CD8-positive, alpha-beta T cell (primary cell): ENCODE measurements at regions of chr20 and their contacts with region 1.

Region 1: DNA sequence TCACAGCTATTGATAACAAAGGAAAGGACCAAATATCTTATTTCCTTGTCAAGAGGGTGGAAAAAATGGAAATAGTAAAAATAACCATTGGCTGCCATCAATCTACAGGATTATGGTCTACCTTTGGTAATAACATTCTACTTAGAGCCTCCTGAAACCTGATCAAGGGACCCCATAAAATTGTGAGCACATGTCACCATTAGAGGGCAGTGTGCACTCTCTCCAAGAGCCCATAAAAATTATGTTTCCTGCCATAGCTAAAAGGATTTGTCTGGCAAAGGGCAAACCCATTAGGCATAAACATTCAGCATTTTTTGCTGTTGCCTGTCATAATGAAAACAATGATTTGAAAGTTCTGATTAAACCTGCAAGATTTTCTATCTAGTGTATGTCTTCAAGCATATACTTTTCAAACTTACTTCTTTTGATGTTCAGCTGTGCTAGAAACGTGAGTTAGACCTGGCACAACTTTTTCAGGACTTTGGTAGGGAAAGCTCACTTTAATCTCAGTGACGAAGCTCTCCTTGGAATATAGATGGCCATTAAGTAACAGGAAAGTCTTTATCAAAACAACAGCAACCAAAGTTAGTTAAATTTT is 120.7 kb upstream of the ZFP64 start:
- DNase-seq: peak; percentile 11 to 79 (median 53)
- ATAC-seq: no peak
- H3K4me3 ChIP-seq: no peak overlapping the region
- H3K4me3 Mint-ChIP-seq: no peak overlapping the region
- H3K27ac ChIP-seq: no peak overlapping the region
- H3K27ac Mint-ChIP-seq: no peak overlapping the region
- H3K4me1 ChIP-seq: peaks cover 20% of the 10 kb centered on the region
- H3K4me1 Mint-ChIP-seq: peaks cover 21% of the 10 kb centered on the region
- H3K27me3 ChIP-seq: peaks cover 0 to 2% of the 10 kb centered on the region in 2 experiments
- H3K27me3 Mint-ChIP-seq: no peaks in the 10 kb centered on the region
- CTCF ChIP-seq: peak; percentile 93

Region 2: GRCh38 chr20:52209154-52209571 is 103.1 kb before region 1 on chr20:
- CTCF ChIA-PET with region 1: no interaction called
- POLR2A ChIA-PET with region 1: no interaction called
- intact Hi-C with region 1: no loop called
- DNase-seq: no peak
- ATAC-seq: no peak
- H3K4me3 ChIP-seq: no peak overlapping the region
- H3K4me3 Mint-ChIP-seq: no peak overlapping the region
- H3K27ac ChIP-seq: no peak overlapping the region
- H3K27ac Mint-ChIP-seq: no peak overlapping the region
- H3K4me1 ChIP-seq: no peaks in the 10 kb centered on the region
- H3K4me1 Mint-ChIP-seq: no peaks in the 10 kb centered on the region
- H3K27me3 ChIP-seq: no peaks in the 10 kb centered on the region
- H3K27me3 Mint-ChIP-seq: peaks cover 13% of the 10 kb centered on the region
- CTCF ChIP-seq: no peak

Region 3: DNA sequence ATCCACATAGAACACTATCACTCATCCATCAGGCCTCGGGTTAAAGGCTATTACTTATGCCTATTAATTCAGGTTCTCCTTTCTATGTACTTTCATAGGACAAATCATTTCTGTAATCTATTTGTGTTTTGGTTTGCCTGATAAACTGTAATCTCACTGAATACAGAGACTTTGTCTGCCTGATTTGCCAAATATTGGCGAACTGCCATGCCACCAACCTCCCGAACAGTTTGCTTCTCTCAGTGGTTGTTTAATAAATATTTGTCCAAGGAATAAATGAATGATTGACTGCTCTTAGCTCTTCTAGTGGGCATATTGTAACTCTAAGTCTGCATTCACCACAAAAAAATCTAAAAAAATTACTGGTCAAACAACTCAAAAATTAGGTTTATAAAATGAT is 49.4 kb after region 1 on chr20:
- CTCF ChIA-PET with region 1: no interaction called
- POLR2A ChIA-PET with region 1: no interaction called
- intact Hi-C with region 1: no loop called
- DNase-seq: no peak
- ATAC-seq: no peak
- H3K4me3 ChIP-seq: no peak overlapping the region
- H3K4me3 Mint-ChIP-seq: no peak overlapping the region
- H3K27ac ChIP-seq: no peak overlapping the region
- H3K27ac Mint-ChIP-seq: no peak overlapping the region
- H3K4me1 ChIP-seq: no peaks in the 10 kb centered on the region
- H3K4me1 Mint-ChIP-seq: peaks cover 2% of the 10 kb centered on the region
- H3K27me3 ChIP-seq: no peaks in the 10 kb centered on the region
- H3K27me3 Mint-ChIP-seq: peaks cover 17% of the 10 kb centered on the region
- CTCF ChIP-seq: no peak

Region 4: DNA sequence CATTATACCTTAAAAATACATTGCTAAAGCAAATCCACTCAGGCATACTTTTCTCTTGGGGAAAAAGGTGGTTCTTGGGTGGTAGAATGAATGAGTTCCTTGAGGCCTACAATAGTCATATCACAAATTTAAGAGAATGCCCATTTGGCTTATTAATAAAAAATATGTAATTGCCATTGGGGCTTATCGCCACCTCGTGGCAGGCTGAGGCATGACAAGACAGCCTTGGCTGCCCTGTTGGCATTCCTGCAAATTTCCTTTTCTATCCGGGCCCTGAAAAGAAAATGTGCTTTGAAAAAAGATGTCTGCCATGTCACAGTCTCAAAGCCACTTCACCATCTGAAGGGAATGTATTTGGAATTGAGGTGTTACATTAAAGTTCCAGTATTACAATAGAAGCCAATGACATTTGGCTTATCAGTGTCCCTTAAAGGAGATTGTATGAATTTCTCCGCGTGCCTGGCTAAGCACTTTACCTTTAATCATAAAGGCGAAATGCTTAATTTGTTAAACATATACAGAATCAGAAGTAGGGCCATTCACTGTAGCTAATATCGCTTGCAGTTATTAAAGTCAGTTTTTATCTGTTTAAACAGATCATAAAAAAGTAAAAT is 67.6 kb after region 1 on chr20:
- CTCF ChIA-PET with region 1: interaction called, 12 read pairs
- POLR2A ChIA-PET with region 1: no interaction called
- intact Hi-C with region 1: loop called in 1 of 2 experiments (anchors 1 kb)
- DNase-seq: peak in 7 of 9 experiments; percentile 5 to 62 (median 43)
- ATAC-seq: no peak
- H3K4me3 ChIP-seq: no peak overlapping the region
- H3K4me3 Mint-ChIP-seq: no peak overlapping the region
- H3K27ac ChIP-seq: no peak overlapping the region
- H3K27ac Mint-ChIP-seq: no peak overlapping the region
- H3K4me1 ChIP-seq: peaks cover 13% of the 10 kb centered on the region
- H3K4me1 Mint-ChIP-seq: peaks cover 19% of the 10 kb centered on the region
- H3K27me3 ChIP-seq: no peaks in the 10 kb centered on the region
- H3K27me3 Mint-ChIP-seq: no peaks in the 10 kb centered on the region
- CTCF ChIP-seq: peak; percentile 95

Region 5: DNA sequence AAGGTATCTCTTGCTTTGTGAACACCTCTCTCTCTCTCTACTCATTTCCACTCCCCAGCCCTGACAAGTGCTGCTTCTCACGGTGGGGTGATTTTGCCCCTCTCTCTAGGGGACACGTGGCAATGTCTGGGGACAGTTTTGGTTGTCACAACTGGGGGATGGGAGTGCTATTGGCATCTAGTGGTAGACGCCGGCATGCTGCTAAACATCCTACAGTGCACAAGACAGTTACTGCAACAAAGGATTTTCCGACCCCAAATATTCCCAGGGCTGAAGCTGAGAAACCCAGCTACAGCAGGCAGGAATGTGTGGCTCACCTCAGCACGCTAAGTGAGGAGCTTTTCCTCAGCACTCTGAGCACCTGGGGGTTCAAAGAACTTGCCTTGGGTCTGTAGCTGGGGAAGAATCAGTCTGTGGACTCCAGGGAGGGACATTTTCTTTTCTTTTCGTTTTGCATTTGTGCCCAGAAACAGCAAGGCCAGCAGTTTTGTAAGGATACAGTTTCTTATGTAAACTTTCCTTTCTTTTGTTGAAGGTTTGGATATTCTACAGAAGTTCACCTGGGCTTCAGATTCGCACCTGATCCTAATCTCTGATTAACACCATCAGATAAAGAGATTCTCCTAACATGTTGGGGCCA is 126.2 kb after region 1 on chr20:
- CTCF ChIA-PET with region 1: interaction called, 13 read pairs
- POLR2A ChIA-PET with region 1: no interaction called
- intact Hi-C with region 1: loop called (anchors 1 to 5 kb)
- DNase-seq: peak in 2 of 9 experiments; percentile 46 to 60
- ATAC-seq: no peak
- H3K4me3 ChIP-seq: no peak overlapping the region
- H3K4me3 Mint-ChIP-seq: no peak overlapping the region
- H3K27ac ChIP-seq: no peak overlapping the region
- H3K27ac Mint-ChIP-seq: no peak overlapping the region
- H3K4me1 ChIP-seq: no peaks in the 10 kb centered on the region
- H3K4me1 Mint-ChIP-seq: peaks cover 9% of the 10 kb centered on the region
- H3K27me3 ChIP-seq: no peaks in the 10 kb centered on the region
- H3K27me3 Mint-ChIP-seq: no peaks in the 10 kb centered on the region
- CTCF ChIP-seq: no peak

Region 6: DNA sequence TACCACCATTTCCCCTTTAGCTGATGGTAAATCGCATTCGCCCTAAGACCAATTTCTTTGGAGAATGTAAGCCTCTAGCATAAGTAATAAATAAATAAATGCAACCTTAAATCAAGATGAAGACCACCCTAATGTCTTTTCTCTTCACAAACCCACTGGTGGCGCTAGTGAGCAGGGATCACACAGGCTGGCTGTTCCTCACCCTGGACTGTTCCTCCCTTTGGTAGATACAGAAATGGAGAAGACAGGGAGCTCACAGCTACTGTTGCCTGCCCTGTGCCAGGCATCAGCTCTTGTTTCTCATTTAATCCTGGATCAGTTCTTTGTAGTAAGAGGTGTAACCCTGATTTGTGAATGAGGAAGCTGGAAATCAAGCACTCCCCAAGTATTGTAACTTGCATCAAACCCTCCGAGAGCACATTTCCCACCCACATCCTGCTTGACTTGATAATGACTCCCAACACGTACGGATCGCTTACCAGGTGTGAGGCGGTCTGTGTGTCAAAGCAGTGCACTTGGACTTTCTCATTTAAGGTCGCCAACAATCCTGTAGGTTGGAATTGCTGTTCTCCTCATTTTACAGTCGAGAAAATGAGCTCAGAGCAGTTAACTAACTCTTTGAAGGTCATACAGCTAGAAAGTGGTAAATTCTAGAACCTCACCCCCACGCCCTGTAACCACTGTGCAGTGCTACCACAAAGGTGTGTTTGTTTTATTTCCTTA is 896.0 kb after region 1 on chr20:
- CTCF ChIA-PET with region 1: interaction called, 13 read pairs
- POLR2A ChIA-PET with region 1: no interaction called
- intact Hi-C with region 1: no loop called
- DNase-seq: peak in 6 of 9 experiments; percentile 9 to 52 (median 21)
- ATAC-seq: peak; percentile 63
- H3K4me3 ChIP-seq: no peak overlapping the region
- H3K4me3 Mint-ChIP-seq: peak overlapping the region; percentile 45
- H3K27ac ChIP-seq: no peak overlapping the region
- H3K27ac Mint-ChIP-seq: peak overlapping the region; percentile 33
- H3K4me1 ChIP-seq: peaks cover 8% of the 10 kb centered on the region
- H3K4me1 Mint-ChIP-seq: peaks cover 12% of the 10 kb centered on the region
- H3K27me3 ChIP-seq: peaks cover 0 to 2% of the 10 kb centered on the region in 2 experiments
- H3K27me3 Mint-ChIP-seq: no peaks in the 10 kb centered on the region
- CTCF ChIP-seq: no peak

Region 7: GRCh38 chr20:53223626-53224025 is 911.4 kb after region 1 on chr20:
- CTCF ChIA-PET with region 1: interaction called, 72 read pairs
- POLR2A ChIA-PET with region 1: no interaction called
- intact Hi-C with region 1: no loop called
- DNase-seq: no peak
- ATAC-seq: no peak
- H3K4me3 ChIP-seq: no peak overlapping the region
- H3K4me3 Mint-ChIP-seq: no peak overlapping the region
- H3K27ac ChIP-seq: no peak overlapping the region
- H3K27ac Mint-ChIP-seq: no peak overlapping the region
- H3K4me1 ChIP-seq: no peaks in the 10 kb centered on the region
- H3K4me1 Mint-ChIP-seq: no peaks in the 10 kb centered on the region
- H3K27me3 ChIP-seq: no peaks in the 10 kb centered on the region
- H3K27me3 Mint-ChIP-seq: peaks cover 7% of the 10 kb centered on the region
- CTCF ChIP-seq: no peak

Region 8: GRCh38 chr20:53939572-53940359 is 1627.5 kb after region 1 on chr20:
- CTCF ChIA-PET with region 1: no interaction called
- POLR2A ChIA-PET with region 1: no interaction called
- intact Hi-C with region 1: loop called in 1 of 2 experiments (anchors 10 kb)
- DNase-seq: peak; percentile 38 to 83 (median 67)
- ATAC-seq: peak; percentile 76
- H3K4me3 ChIP-seq: no peak overlapping the region
- H3K4me3 Mint-ChIP-seq: no peak overlapping the region
- H3K27ac ChIP-seq: no peak overlapping the region
- H3K27ac Mint-ChIP-seq: no peak overlapping the region
- H3K4me1 ChIP-seq: peaks cover 31% of the 10 kb centered on the region
- H3K4me1 Mint-ChIP-seq: peaks cover 43% of the 10 kb centered on the region
- H3K27me3 ChIP-seq: no peaks in the 10 kb centered on the region
- H3K27me3 Mint-ChIP-seq: no peaks in the 10 kb centered on the region
- CTCF ChIP-seq: peak; percentile 75

Region 9: GRCh38 chr20:54199721-54200176 is 1887.5 kb after region 1 on chr20:
- CTCF ChIA-PET with region 1: interaction called, 3 read pairs
- POLR2A ChIA-PET with region 1: no interaction called
- intact Hi-C with region 1: loop called (anchors 2 to 5 kb)
- DNase-seq: peak; percentile 46 to 80 (median 69)
- ATAC-seq: peak; percentile 63
- H3K4me3 ChIP-seq: no peak overlapping the region
- H3K4me3 Mint-ChIP-seq: no peak overlapping the region
- H3K27ac ChIP-seq: no peak overlapping the region
- H3K27ac Mint-ChIP-seq: no peak overlapping the region
- H3K4me1 ChIP-seq: no peaks in the 10 kb centered on the region
- H3K4me1 Mint-ChIP-seq: no peaks in the 10 kb centered on the region
- H3K27me3 ChIP-seq: no peaks in the 10 kb centered on the region
- H3K27me3 Mint-ChIP-seq: peaks cover 2% of the 10 kb centered on the region
- CTCF ChIP-seq: peak; percentile 95